AG04450 (cell line): ENCODE measurements at regions of chr7 and their contacts with region 1.

Region 1: DNA sequence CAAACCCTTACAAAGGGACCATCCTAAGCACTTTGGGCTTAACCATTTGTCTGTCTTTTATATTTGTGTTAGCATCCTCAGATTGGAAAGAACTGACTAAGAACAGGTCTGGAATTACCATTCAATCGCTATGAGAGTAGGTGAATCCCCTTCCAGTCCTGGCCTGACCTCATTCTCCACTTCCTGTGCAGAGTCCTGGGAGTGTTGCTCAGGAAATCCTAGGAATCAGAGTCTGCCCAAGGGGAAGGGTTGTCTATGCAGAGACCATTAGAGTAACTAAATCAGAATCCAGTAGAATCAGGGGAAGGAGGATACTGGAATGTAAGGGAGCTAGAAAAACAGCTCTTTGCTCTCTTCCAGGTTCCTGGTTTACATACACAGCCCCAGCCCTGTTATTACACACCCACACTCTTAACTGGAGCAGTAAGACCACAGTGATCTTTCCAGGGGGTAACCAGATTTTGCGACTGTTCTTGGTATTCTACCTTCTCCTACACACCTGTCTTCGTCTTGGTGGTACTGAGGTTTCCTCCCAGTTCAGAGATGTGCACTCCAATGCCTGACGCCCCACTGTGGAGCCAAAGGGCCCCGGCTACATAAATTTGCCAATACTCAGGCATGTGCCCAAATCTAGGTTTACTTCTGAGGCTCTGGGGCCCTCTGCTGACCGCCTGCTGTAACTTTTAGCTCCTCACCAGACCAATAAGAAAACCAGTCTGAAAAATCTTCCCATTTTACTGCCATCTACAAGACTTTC is 103.7 kb downstream of the RNF216 start:
- DNase-seq: peak; percentile 47
- H3K4me3 ChIP-seq: no peak overlapping the region
- H3K27ac ChIP-seq: peak overlapping the region; percentile 2
- H3K27me3 ChIP-seq: no peaks in the 10 kb centered on the region
- CTCF ChIP-seq: peak; percentile 89

Region 2: GRCh38 chr7:5494683-5495561 is 182.8 kb before region 1 on chr7:
- CTCF ChIA-PET with region 1: interaction called, 40 read pairs
- POLR2A ChIA-PET with region 1: no interaction called
- DNase-seq: no peak
- H3K4me3 ChIP-seq: no peak overlapping the region
- H3K27ac ChIP-seq: peak overlapping the region; percentile 31
- H3K27me3 ChIP-seq: no peaks in the 10 kb centered on the region
- CTCF ChIP-seq: peak; percentile 98

Region 3: DNA sequence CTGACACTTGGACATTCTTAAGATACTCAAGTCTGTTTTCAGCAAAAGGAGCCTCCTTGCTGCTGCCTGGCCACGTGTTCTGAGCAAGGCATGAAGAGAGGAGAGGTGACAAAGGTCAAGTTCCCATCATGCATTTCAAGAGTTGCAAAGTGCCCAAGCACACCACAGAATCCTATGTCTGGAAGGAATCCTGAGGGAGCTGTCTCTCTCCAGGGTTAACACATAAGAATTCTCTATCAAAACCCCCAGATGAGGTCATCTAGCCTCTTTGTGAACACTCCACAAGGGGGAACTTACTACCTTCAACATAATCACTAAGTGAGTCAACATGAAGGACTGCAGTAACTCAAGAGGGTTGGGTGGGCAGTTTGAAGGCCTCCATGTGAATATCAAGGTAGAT is 51.8 kb before region 1 on chr7:
- CTCF ChIA-PET with region 1: interaction called, 10 read pairs
- POLR2A ChIA-PET with region 1: no interaction called
- DNase-seq: peak; percentile 74
- H3K4me3 ChIP-seq: no peak overlapping the region
- H3K27ac ChIP-seq: peak overlapping the region; percentile 77
- H3K27me3 ChIP-seq: no peaks in the 10 kb centered on the region
- CTCF ChIP-seq: peak; percentile 44

Region 4: GRCh38 chr7:5689118-5689517 is 11.4 kb after region 1 on chr7:
- CTCF ChIA-PET with region 1: interaction called, 22 read pairs
- POLR2A ChIA-PET with region 1: interaction called, 15 read pairs
- DNase-seq: no peak
- H3K4me3 ChIP-seq: no peak overlapping the region
- H3K27ac ChIP-seq: peak overlapping the region; percentile 68
- H3K27me3 ChIP-seq: no peaks in the 10 kb centered on the region
- CTCF ChIP-seq: no peak

Region 5: GRCh38 chr7:5694912-5695726 is 17.4 kb after region 1 on chr7:
- CTCF ChIA-PET with region 1: interaction called, 20 read pairs
- POLR2A ChIA-PET with region 1: interaction called, 15 read pairs
- DNase-seq: peak; percentile 80
- H3K4me3 ChIP-seq: peak overlapping the region; percentile 45
- H3K27ac ChIP-seq: peak overlapping the region; percentile 99
- H3K27me3 ChIP-seq: no peaks in the 10 kb centered on the region
- CTCF ChIP-seq: no peak

Region 6: DNA sequence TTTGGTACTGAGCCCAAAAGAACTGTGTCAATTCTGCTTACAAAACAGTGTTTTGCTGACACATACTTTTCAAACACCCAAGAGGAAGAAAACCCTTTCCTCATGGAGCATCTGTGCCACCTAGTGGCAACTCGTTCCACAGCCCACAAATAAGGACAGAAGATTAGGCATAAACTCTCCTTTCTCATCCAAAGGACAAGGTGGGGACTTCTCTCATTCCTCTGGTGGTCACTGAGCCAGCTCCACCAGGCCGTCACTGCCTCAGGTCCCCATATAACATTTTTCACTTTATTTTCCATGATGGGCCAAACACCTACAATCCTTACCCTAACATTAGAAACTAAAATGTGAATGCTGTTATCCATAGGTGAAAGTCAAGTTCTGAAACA is 26.8 kb after region 1 on chr7:
- CTCF ChIA-PET with region 1: interaction called, 22 read pairs
- POLR2A ChIA-PET with region 1: no interaction called
- DNase-seq: peak; percentile 69
- H3K4me3 ChIP-seq: no peak overlapping the region
- H3K27ac ChIP-seq: no peak overlapping the region
- H3K27me3 ChIP-seq: no peaks in the 10 kb centered on the region
- CTCF ChIP-seq: peak; percentile 96